H1 (cell line): ENCODE measurements at regions of chr3 and their contacts with region 1.

Region 1: GRCh38 chr3:52471371-52472238 is 16.2 kb downstream of the NISCH start:
- DNase-seq: peak in 1 of 2 experiments; percentile 85
- H3K4me3 ChIP-seq: no peak overlapping the region
- H3K27ac ChIP-seq: no peak overlapping the region
- H3K4me1 ChIP-seq: no peaks in the 10 kb centered on the region; a peak in 3 of 7 replicates
- H3K27me3 ChIP-seq: no peaks in the 10 kb centered on the region; a peak in 1 of 7 replicates
- CTCF ChIP-seq: peak; percentile 59 to 87 (median 76)
- EP300 ChIP-seq: no peak
- POLR2A ChIP-seq: no peak
- RAD21 ChIP-seq: peak; percentile 63 to 72

Region 2: DNA sequence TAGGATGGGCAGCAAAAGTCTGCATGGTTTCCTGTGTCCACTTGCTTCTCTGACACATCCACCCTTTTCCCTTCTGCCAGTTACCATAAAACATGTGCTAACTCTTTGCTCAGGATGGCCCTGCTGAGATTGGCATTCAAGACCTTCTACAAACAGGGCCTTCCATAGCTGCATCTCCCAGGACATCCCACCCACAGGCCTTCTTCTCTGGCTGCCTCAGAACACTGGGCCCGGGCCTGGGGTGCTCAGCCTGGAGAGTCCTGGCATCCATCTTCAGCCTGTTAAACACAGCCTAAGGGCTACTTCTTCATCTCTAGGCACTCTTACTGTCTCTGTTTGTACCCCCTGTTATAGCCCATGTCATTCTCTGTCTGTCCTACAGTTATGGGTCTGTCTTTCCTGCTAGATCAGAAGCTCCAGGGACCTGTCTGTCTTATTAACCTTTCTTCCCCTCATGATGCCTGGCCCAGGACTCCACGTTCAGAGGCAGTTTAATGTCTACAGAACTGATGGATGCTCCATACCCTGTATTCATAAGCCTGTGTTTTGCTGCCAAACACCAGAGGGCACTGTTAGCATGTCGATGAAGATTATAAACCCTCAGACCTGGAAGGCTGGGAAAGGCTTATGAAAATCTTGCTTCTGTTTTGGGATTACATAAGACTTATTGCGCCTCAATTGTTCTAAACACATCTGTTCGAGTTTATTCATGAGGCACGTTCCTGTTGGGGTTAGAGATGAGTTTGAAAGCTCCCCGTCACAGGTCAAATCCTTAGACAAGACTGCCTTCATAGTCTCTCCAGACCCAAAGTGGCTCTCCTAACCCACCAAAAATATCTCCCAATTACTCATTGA is 43.2 kb before region 1 on chr3:
- CTCF ChIA-PET with region 1: interaction called, 15 read pairs
- POLR2A ChIA-PET with region 1: no interaction called
- DNase-seq: no peak
- H3K4me3 ChIP-seq: no peak overlapping the region
- H3K27ac ChIP-seq: no peak overlapping the region
- H3K4me1 ChIP-seq: peaks cover 0 to under 1% (median 0%) of the 10 kb centered on the region in 4 experiments; a peak in 1 of 7 replicates
- H3K27me3 ChIP-seq: no peaks in the 10 kb centered on the region
- CTCF ChIP-seq: peak in 2 of 3 experiments; percentile 79 to 81; a peak in 3 of 4 replicates
- EP300 ChIP-seq: no peak
- POLR2A ChIP-seq: no peak
- RAD21 ChIP-seq: peak; percentile 80 to 86

Region 3: DNA sequence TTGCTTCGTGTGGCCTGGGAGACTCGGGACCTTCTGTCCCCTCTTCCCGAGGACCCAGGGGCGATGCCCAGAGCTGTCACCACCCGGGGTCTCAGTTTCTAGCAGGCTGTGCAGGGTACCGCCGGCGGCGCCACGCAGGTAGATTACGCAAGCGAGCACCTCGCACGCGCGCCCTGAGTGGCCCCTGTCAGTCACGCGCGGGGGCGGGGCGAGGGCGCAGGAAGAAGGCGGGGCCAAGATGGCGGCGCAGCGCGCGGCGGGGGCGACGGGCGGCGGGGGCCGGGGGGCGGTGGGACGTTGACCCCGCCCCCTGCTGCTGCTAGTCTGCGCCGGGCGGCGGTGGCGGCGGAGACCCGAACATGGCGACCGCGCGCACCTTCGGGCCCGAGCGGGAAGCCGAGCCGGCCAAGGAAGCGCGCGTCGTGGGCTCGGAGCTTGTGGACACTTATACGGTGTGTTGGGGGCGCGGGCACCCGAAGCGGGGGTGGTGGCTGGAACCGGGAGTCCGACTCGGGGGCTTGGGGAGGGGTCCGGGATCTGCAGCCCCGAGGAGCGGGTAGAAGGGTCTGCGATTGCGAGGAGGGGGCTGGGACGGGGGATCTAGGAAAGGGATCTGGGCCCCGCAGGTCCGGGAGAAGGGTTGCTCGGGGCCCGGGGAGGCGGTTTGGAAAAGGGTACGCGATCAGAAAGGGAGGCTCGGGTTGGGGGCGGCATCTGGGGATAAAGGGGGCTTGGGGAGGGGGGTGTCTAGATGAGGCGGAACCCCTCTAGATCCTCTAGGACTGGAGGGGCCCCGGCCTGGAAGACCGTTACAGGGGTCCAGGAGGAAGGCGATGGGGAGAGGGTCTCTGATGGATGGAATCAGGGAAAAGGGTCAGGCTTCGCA is 16.1 kb before region 1 on chr3 and contains the start of gene NISCH:
- CTCF ChIA-PET with region 1: interaction called, 79 read pairs
- POLR2A ChIA-PET with region 1: interaction called, 7 read pairs
- DNase-seq: peak in 1 of 2 experiments; percentile 96
- H3K4me3 ChIP-seq: peak within 1 kb of the TSS; percentile 63 to 98 (median 87)
- H3K27ac ChIP-seq: peak within 1 kb of the TSS; percentile 1; the same call in 1 of the 2 replicates
- H3K4me1 ChIP-seq: peaks cover 0 to 24% (median 8%) of the 10 kb centered on the region in 4 experiments; a peak in 6 of 7 replicates
- H3K27me3 ChIP-seq: no peaks in the 10 kb centered on the region
- CTCF ChIP-seq: no peak
- EP300 ChIP-seq: no peak
- POLR2A ChIP-seq: peak in 1 of 2 experiments; percentile 55; a peak in 1 of 3 replicates
- RAD21 ChIP-seq: no peak
- total RNA-seq, gene NISCH: 67.0 and 71.9 TPM in 2 replicates

Region 4: DNA sequence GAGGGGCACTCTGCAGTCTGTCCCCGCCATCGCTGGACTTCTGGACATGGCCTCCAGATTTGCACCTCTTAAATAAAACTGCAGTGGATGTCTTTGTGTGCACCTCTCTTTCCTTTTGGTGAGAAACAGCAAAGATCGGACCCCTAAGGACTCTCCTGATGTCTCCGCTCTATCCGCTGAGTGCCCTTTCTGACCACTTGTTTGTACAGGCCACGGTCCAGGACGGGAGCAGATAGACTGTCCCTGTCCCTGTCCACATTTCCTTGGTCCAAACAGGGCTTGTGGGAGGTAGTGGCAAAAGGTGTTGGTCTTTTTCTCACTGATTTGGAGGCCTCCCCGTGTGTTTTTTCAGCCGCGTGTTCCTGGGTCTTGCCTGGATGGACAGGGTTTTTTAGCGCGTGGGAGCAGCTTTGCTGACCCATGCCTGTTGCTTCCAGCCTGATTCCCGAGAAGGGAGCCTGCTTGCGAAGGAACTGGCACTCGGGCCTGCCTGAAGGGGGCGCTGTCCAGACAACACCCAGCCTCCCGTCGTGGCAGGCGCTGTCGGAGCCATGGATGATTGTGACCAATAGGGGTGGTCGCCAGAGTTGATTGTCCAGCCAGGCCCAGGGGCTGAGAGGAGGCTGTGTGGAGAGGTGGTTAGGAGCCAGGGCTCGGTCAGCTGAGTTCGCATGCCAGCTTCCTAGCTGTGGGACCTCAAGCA is 10.4 kb after region 1 on chr3:
- CTCF ChIA-PET with region 1: interaction called, 28 read pairs
- POLR2A ChIA-PET with region 1: interaction called, 3 read pairs
- DNase-seq: peak; percentile 51 to 93
- H3K4me3 ChIP-seq: no peak overlapping the region
- H3K27ac ChIP-seq: no peak overlapping the region
- H3K4me1 ChIP-seq: no peaks in the 10 kb centered on the region
- H3K27me3 ChIP-seq: no peaks in the 10 kb centered on the region
- CTCF ChIP-seq: peak in 2 of 3 experiments; percentile 82 to 98; a peak in 3 of 4 replicates
- EP300 ChIP-seq: no peak
- POLR2A ChIP-seq: no peak
- RAD21 ChIP-seq: peak; percentile 62 to 71

Region 5: DNA sequence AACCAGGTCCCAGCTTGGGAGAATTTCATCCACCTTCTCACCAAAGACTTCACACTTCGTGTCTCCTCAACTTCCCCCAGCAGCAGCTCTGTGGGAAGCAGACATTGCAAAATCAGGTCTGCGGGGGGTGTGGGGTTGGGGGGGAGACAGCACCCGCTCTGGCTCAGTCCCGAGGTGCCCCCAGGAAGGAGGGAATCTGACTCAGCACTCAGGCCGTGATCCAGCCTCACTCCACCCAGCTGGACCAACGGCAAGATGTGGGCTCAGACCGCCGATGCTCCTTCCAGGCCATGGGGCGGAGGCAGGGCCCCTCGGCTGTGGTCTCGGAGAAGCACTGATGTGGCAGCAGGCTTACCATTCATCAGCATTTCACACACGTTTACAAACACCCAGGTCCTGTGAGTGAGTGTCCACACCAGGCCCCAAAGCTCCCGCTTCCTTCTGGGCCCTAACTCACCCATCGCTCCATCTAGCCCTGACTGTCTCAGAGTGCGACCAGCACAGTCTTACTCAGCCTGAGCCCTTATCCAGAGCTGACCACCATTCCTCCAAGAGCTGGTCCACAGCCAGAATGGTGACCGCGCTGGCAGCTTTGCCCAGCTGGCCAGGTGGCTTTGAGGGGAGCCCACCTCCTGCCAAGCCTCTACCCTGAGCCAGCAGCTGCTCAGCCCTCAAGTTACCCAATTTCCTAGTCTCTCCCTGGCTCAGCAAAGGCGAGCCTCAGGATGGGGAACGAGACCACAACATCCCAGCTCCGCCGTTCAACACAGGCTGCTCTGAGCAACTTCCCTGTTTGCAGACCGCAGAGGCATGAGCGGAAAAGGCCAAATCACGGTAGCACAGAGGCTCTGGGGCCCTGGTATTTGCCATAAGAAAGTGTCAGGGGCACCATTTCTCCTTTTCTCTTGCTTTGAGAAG is 26.8 kb after region 1 on chr3:
- CTCF ChIA-PET with region 1: interaction called, 11 read pairs
- POLR2A ChIA-PET with region 1: no interaction called
- DNase-seq: no peak
- H3K4me3 ChIP-seq: no peak overlapping the region
- H3K27ac ChIP-seq: no peak overlapping the region
- H3K4me1 ChIP-seq: peaks cover 0 to 6% (median under 1%) of the 10 kb centered on the region in 4 experiments; a peak in 3 of 7 replicates
- H3K27me3 ChIP-seq: no peaks in the 10 kb centered on the region; a peak in 2 of 7 replicates
- CTCF ChIP-seq: no peak
- EP300 ChIP-seq: no peak
- POLR2A ChIP-seq: no peak
- RAD21 ChIP-seq: no peak

Region 6: GRCh38 chr3:52518720-52519444 is 47.3 kb after region 1 on chr3:
- CTCF ChIA-PET with region 1: interaction called, 11 read pairs
- POLR2A ChIA-PET with region 1: interaction called, 3 read pairs
- DNase-seq: peak in 1 of 2 experiments; percentile 84
- H3K4me3 ChIP-seq: peak overlapping the region; percentile 31 to 60 (median 34)
- H3K27ac ChIP-seq: no peak overlapping the region
- H3K4me1 ChIP-seq: peaks cover 0 to 6% (median 4%) of the 10 kb centered on the region in 4 experiments; a peak in 5 of 7 replicates
- H3K27me3 ChIP-seq: peaks cover 0 to 11% (median 4%) of the 10 kb centered on the region in 4 experiments; a peak in 5 of 7 replicates
- CTCF ChIP-seq: no peak
- EP300 ChIP-seq: no peak
- POLR2A ChIP-seq: no peak
- RAD21 ChIP-seq: no peak

Region 7: GRCh38 chr3:52649461-52650210 is 178.0 kb after region 1 on chr3:
- CTCF ChIA-PET with region 1: no interaction called
- POLR2A ChIA-PET with region 1: no interaction called
- DNase-seq: no peak
- H3K4me3 ChIP-seq: no peak overlapping the region
- H3K27ac ChIP-seq: no peak overlapping the region
- H3K4me1 ChIP-seq: no peaks in the 10 kb centered on the region
- H3K27me3 ChIP-seq: no peaks in the 10 kb centered on the region
- CTCF ChIP-seq: no peak
- EP300 ChIP-seq: no peak
- POLR2A ChIP-seq: no peak
- RAD21 ChIP-seq: no peak